ENCODE measurements at regions of chr1 and their contacts with region 1.

Region 1: GRCh38 chr1:8259498-8260290 is 58.2 kb upstream of the SLC45A1 start:
- DNase-seq: peak; percentile 93
- H3K4me3 Mint-ChIP-seq: peak overlapping the region; percentile 59
- H3K27ac Mint-ChIP-seq: peak overlapping the region; percentile 98
- H3K4me1 Mint-ChIP-seq: peaks cover 38% of the 10 kb centered on the region
- H3K27me3 Mint-ChIP-seq: no peaks in the 10 kb centered on the region
- CTCF ChIP-seq: no peak

Region 2: GRCh38 chr1:8004803-8005554 is 254.7 kb before region 1 on chr1:
- CTCF ChIA-PET with region 1: no interaction called
- POLR2A ChIA-PET with region 1: interaction called, 28 read pairs
- intact Hi-C with region 1: no loop called
- DNase-seq: peak; percentile 99
- H3K4me3 Mint-ChIP-seq: peak overlapping the region; percentile 57
- H3K27ac Mint-ChIP-seq: peak overlapping the region; percentile 84
- H3K4me1 Mint-ChIP-seq: peaks cover 38% of the 10 kb centered on the region
- H3K27me3 Mint-ChIP-seq: no peaks in the 10 kb centered on the region
- CTCF ChIP-seq: no peak

Region 3: GRCh38 chr1:8137481-8138244 is 122.0 kb before region 1 on chr1:
- CTCF ChIA-PET with region 1: no interaction called
- POLR2A ChIA-PET with region 1: interaction called, 10 read pairs
- intact Hi-C with region 1: no loop called
- DNase-seq: peak; percentile 85
- H3K4me3 Mint-ChIP-seq: peak overlapping the region; percentile 55
- H3K27ac Mint-ChIP-seq: peak overlapping the region; percentile 93
- H3K4me1 Mint-ChIP-seq: peaks cover 44% of the 10 kb centered on the region
- H3K27me3 Mint-ChIP-seq: no peaks in the 10 kb centered on the region
- CTCF ChIP-seq: no peak

Region 4: DNA sequence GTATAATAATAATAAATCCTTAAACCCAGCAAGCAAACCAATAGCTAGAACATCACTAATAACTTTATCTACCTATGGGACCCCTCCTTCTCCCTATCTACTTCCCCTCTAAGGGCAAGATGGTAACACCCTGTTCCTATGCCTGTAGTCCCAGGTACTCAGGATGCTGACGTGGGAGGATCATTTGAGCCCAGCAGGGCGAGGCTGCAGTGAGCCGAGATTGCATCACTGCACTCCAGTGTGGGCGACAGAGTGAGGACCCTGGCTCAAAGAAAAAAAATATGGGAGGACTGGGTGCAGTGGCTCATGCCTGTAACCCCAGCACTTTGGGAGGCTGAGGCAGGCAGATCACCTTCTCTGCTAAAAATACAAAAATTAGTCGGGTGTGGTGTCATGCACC is 84.9 kb before region 1 on chr1:
- CTCF ChIA-PET with region 1: no interaction called
- POLR2A ChIA-PET with region 1: interaction called, 13 read pairs
- intact Hi-C with region 1: no loop called
- DNase-seq: peak; percentile 75
- H3K4me3 Mint-ChIP-seq: no peak overlapping the region
- H3K27ac Mint-ChIP-seq: peak overlapping the region; percentile 93
- H3K4me1 Mint-ChIP-seq: peaks cover 14% of the 10 kb centered on the region
- H3K27me3 Mint-ChIP-seq: no peaks in the 10 kb centered on the region
- CTCF ChIP-seq: no peak

Region 5: GRCh38 chr1:8197493-8198282 is 62.0 kb before region 1 on chr1:
- CTCF ChIA-PET with region 1: no interaction called
- POLR2A ChIA-PET with region 1: interaction called, 39 read pairs
- intact Hi-C with region 1: no loop called
- DNase-seq: peak; percentile 97
- H3K4me3 Mint-ChIP-seq: peak overlapping the region; percentile 24
- H3K27ac Mint-ChIP-seq: peak overlapping the region; percentile 77
- H3K4me1 Mint-ChIP-seq: peaks cover 64% of the 10 kb centered on the region
- H3K27me3 Mint-ChIP-seq: no peaks in the 10 kb centered on the region
- CTCF ChIP-seq: no peak

Region 6: GRCh38 chr1:8314346-8315280 is 54.9 kb after region 1 on chr1:
- CTCF ChIA-PET with region 1: interaction called, 4 read pairs
- POLR2A ChIA-PET with region 1: interaction called, 10 read pairs
- intact Hi-C with region 1: no loop called
- DNase-seq: peak; percentile 85
- H3K4me3 Mint-ChIP-seq: no peak overlapping the region
- H3K27ac Mint-ChIP-seq: no peak overlapping the region
- H3K4me1 Mint-ChIP-seq: peaks cover 15% of the 10 kb centered on the region
- H3K27me3 Mint-ChIP-seq: no peaks in the 10 kb centered on the region
- CTCF ChIP-seq: peak; percentile 95

Measured in MCF 10A (cell line).